ENCODE measurements at regions of chr1 and their contacts with region 1.

Region 1: GRCh38 chr1:68213843-68214242 is 18.5 kb downstream of the WLS start:
- DNase-seq: no peak

Region 2: GRCh38 chr1:68269637-68270426 is 56.0 kb after region 1 on chr1:
- CTCF ChIA-PET with region 1: interaction called, 11 read pairs
- POLR2A ChIA-PET with region 1: no interaction called
- DNase-seq: no peak